ENCODE measurements at regions of chr7 and their contacts with region 1.

Region 1: DNA sequence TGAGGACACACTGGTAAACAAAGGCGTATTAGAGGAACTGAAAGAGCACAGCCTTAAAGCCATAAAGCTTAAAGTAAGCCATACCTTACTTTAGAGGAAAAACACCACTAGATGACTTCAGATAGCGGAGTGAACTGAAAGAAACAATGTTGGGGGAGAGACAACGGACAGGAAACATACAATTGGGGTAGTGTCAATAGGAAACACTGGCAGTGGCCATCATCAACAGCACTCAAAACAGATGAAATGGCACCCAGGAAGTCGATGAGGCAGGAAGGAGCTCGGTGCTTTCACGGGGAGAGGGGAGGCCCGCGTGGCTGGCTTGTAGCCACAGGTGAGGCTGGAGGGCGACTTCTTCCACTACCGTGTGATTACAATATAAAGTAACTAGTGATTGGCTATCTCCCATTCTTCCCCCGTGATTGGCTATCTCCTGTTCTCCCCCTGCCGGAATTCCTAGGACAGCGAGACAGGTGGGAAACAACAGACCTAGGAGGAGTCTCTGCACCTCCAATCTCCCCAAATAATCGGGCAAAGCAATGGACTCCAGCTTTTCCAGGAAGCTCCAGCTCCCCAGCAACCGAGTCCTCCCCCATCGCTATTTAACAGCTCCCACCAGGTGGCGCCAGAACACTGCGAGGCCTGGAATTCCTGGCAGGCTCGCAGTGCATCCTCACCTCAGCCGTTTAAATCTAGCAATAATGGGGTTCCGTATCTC is 2.4 kb upstream of the TAS2R38 start:
- DNase-seq: peak; percentile 93
- H3K4me3 ChIP-seq: peak overlapping the region in 6 of 8 donors; percentile 11 to 65 (median 26)
- H3K27ac ChIP-seq: peak overlapping the region in 6 of 8 donors; percentile 8 to 83 (median 68)
- H3K4me1 ChIP-seq: peaks cover 0 to 15% (median 4%) of the 10 kb centered on the region in 6 donors
- H3K27me3 ChIP-seq: no peaks in the 10 kb centered on the region
- CTCF ChIP-seq: peak; percentile 54 to 87 (median 78)
- POLR2A ChIP-seq: no peak

Region 2: GRCh38 chr7:141889321-141889720 is 86.6 kb before region 1 on chr7:
- intact Hi-C with region 1: no loop called
- DNase-seq: no peak
- H3K4me3 ChIP-seq: no peak overlapping the region
- H3K27ac ChIP-seq: peak overlapping the region in 4 of 8 donors; percentile 53 to 76 (median 72)
- H3K4me1 ChIP-seq: peaks cover 0 to 5% (median 0%) of the 10 kb centered on the region in 6 donors
- H3K27me3 ChIP-seq: no peaks in the 10 kb centered on the region
- CTCF ChIP-seq: no peak
- POLR2A ChIP-seq: no peak

Region 3: DNA sequence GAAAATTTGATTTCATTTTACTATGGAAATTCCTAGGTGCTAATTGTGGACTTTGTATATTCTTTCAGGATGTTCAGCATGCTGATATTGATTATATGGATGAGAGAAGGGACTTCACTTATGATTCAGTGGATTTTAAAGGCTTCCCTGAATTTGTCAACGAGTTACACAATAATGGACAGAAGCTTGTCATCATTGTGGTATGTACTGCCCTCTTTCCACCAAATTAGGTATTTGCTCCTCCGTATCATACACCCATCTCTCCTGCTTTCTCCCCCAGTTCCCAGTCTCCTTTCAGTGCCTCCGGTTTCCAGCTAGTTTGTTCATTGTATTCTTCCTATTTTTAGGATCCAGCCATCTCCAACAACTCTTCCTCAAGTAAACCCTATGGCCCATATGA is 54.3 kb after region 1 on chr7:
- intact Hi-C with region 1: no loop called
- DNase-seq: no peak
- H3K4me3 ChIP-seq: no peak overlapping the region
- H3K27ac ChIP-seq: peak overlapping the region in 4 of 8 donors; percentile 69 to 85 (median 74)
- H3K4me1 ChIP-seq: no peaks in the 10 kb centered on the region
- H3K27me3 ChIP-seq: peaks cover 0 to 4% (median 0%) of the 10 kb centered on the region in 7 donors
- CTCF ChIP-seq: peak in 4 of 11 experiments; percentile 17 to 31 (median 26)
- POLR2A ChIP-seq: no peak

Region 4: GRCh38 chr7:142188846-142189245 is 212.9 kb after region 1 on chr7:
- intact Hi-C with region 1: loop called (anchors 5 kb)
- DNase-seq: no peak
- H3K4me3 ChIP-seq: no peak overlapping the region
- H3K27ac ChIP-seq: no peak overlapping the region
- H3K4me1 ChIP-seq: peaks cover 0 to 14% (median 0%) of the 10 kb centered on the region in 6 donors
- H3K27me3 ChIP-seq: peaks cover 0 to 3% (median 0%) of the 10 kb centered on the region in 7 donors
- CTCF ChIP-seq: peak in 4 of 11 experiments; percentile 8 to 39 (median 29)
- POLR2A ChIP-seq: no peak